Endothelial cell of umbilical vein (primary cell): ENCODE measurements at regions of chr22 and their contacts with region 1.

Region 1: DNA sequence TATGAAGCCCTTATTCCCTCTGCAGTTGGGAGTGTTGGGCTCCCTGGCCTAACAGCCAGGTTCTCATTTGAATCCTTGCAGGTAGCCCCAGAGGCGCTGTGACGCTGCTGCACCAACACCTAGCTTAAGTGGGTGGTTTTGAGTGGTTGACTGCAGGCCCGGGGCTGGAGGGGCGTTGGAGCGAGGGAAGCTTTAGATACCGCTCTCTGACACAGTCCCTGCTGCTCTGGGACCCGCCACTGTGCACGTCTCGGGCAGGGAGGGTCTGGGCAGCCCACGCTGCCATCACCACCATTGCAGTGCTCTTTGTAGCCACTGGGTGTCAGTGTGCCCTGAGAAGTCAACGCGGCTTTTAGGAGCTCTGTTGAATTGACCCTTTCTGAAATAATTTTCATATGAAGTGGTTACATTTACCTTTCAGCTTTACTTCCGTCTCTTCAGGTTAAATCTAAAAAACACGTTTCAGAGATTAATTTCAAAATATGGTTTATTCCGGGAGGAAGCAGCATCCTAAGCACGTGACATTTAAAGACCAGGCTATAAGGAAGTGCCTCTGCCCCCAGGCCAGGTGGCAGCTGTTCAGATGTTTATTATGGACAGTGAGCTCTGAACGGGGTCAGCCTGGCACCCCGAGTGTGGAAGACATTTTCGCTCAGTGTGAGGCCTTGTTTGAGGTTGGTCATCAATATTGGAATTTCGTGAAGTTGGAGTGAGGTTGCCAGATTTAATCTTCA is 30.9 kb upstream of the PARVB start:
- DNase-seq: peak; percentile 53
- H3K4me3 ChIP-seq: no peak overlapping the region
- H3K27ac ChIP-seq: no peak overlapping the region
- H3K4me1 ChIP-seq: peaks cover 6% of the 10 kb centered on the region
- H3K27me3 ChIP-seq: no peaks in the 10 kb centered on the region
- CTCF ChIP-seq: peak; percentile 90 to 94
- POLR2A ChIP-seq: no peak

Region 2: DNA sequence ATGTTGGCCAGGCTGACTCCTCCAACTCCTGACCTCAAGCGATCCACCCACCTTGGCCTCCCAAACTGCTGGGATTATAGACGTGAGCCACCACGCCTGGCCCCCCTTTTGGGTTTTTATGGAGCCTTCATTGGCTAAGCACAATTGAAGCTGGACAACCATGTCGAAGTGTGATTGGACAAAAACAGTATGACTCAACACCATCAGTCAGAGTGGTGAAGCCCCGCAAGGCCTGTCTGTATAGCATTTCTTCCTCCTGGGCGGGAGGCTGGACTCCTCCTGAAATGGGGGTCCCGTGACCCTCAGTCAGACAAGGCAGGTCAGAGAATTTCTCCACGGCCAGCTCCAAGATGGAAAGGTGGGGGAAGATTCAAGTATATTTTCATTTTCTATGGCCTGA is 27.8 kb after region 1 on chr22:
- CTCF ChIA-PET with region 1: interaction called, 21 read pairs
- POLR2A ChIA-PET with region 1: no interaction called
- dilution Hi-C with region 1: no loop called
- intact Hi-C with region 1: no loop called
- DNase-seq: peak; percentile 54
- H3K4me3 ChIP-seq: no peak overlapping the region
- H3K27ac ChIP-seq: peak overlapping the region; percentile 96
- H3K4me1 ChIP-seq: peaks cover 42% of the 10 kb centered on the region
- H3K27me3 ChIP-seq: no peaks in the 10 kb centered on the region
- CTCF ChIP-seq: no peak
- POLR2A ChIP-seq: no peak

Region 3: DNA sequence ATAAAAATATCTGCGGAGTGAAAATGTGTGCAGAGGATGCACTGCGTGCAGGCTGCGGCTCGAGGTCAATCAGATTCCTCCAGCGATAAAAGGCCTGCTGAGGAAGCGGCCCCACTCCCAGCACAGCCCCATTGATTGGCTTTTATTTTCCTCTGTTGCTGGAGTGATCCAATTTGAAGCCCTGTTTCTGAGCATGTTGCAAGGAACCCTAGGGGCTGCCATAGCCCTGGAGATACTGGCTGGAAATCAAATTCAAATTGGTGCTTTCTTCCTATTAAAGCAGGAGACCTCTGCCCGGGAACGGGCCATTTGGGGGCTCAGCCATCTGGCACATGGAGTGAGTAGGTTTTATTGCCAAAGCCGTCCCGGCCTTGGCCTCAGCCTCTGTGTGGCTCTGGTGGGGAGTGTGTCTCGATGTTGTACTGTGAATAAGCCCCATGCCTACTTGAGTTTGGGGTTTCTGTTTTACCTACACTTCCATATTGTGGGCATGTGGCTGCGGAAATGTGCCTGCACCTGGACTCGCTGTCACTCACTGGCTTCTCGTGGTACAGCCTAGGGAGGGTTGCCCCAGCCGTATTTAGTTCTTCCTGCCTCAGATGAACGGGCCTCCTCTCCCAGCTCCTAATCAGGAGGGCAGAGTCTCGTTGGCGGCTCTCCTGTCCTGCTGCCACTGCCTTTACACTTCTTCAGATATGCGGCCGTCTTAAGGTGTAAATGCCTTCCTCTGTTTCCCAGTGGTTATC is 56.5 kb after region 1 on chr22:
- CTCF ChIA-PET with region 1: interaction called, 11 read pairs
- POLR2A ChIA-PET with region 1: no interaction called
- dilution Hi-C with region 1: no loop called
- intact Hi-C with region 1: no loop called
- DNase-seq: peak; percentile 33
- H3K4me3 ChIP-seq: no peak overlapping the region
- H3K27ac ChIP-seq: peak overlapping the region; percentile 5
- H3K4me1 ChIP-seq: peaks cover 32% of the 10 kb centered on the region
- H3K27me3 ChIP-seq: no peaks in the 10 kb centered on the region
- CTCF ChIP-seq: no peak
- POLR2A ChIP-seq: no peak

Region 4: DNA sequence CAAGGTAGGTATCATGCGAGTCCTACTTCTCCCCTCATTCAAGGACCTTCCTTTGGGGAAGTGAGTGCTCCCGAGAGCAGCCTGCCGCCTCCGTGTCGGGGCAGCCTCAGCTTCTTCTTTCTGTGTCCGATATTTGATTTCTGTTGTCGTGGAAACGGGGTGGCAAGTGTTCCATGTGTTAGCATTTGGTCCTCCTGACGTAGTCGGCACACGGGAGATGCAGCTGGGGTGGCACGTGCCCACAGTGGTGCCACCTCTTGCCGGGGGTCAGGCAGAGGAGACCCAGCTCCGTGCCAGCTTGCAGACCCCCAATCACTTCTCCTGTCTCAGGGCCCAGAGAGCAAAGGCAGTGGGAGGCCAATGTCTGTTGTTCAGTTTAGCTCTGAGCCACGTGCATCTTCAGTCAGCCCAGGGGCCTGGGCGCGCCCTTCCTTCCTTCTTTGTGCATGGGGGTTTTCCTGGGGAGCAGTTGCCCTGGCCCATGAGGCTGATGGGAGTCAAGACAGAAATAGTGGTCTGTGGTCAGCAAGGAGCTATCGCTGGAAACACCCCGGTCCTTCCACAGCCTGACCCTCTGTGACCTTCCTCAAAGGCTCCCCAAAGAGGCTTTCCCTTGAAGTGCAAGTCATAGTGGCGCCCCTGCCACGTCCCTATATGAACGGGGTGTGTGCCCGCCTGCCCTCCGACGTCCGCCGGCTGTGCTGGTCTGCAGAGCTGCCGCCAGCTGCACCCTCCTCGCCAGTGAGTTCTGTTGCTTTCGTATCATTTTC is 75.4 kb after region 1 on chr22:
- CTCF ChIA-PET with region 1: interaction called, 50 read pairs
- POLR2A ChIA-PET with region 1: no interaction called
- dilution Hi-C with region 1: no loop called
- intact Hi-C with region 1: no loop called
- DNase-seq: no peak
- H3K4me3 ChIP-seq: no peak overlapping the region
- H3K27ac ChIP-seq: no peak overlapping the region
- H3K4me1 ChIP-seq: peaks cover 18% of the 10 kb centered on the region
- H3K27me3 ChIP-seq: no peaks in the 10 kb centered on the region
- CTCF ChIP-seq: no peak
- POLR2A ChIP-seq: no peak

Region 5: GRCh38 chr22:44097263-44098082 is 104.3 kb after region 1 on chr22:
- CTCF ChIA-PET with region 1: interaction called, 11 read pairs
- POLR2A ChIA-PET with region 1: no interaction called
- dilution Hi-C with region 1: no loop called
- intact Hi-C with region 1: no loop called
- DNase-seq: no peak
- H3K4me3 ChIP-seq: no peak overlapping the region
- H3K27ac ChIP-seq: no peak overlapping the region
- H3K4me1 ChIP-seq: no peaks in the 10 kb centered on the region
- H3K27me3 ChIP-seq: no peaks in the 10 kb centered on the region
- CTCF ChIP-seq: no peak
- POLR2A ChIP-seq: no peak

Region 6: GRCh38 chr22:44329179-44329796 is 336.1 kb after region 1 on chr22:
- CTCF ChIA-PET with region 1: interaction called, 14 read pairs
- POLR2A ChIA-PET with region 1: no interaction called
- dilution Hi-C with region 1: no loop called
- intact Hi-C with region 1: loop called (anchors 5 kb)
- DNase-seq: no peak
- H3K4me3 ChIP-seq: no peak overlapping the region
- H3K27ac ChIP-seq: no peak overlapping the region
- H3K4me1 ChIP-seq: no peaks in the 10 kb centered on the region
- H3K27me3 ChIP-seq: peaks cover 29 to 30% of the 10 kb centered on the region in 2 experiments
- CTCF ChIP-seq: no peak
- POLR2A ChIP-seq: no peak

Region 7: DNA sequence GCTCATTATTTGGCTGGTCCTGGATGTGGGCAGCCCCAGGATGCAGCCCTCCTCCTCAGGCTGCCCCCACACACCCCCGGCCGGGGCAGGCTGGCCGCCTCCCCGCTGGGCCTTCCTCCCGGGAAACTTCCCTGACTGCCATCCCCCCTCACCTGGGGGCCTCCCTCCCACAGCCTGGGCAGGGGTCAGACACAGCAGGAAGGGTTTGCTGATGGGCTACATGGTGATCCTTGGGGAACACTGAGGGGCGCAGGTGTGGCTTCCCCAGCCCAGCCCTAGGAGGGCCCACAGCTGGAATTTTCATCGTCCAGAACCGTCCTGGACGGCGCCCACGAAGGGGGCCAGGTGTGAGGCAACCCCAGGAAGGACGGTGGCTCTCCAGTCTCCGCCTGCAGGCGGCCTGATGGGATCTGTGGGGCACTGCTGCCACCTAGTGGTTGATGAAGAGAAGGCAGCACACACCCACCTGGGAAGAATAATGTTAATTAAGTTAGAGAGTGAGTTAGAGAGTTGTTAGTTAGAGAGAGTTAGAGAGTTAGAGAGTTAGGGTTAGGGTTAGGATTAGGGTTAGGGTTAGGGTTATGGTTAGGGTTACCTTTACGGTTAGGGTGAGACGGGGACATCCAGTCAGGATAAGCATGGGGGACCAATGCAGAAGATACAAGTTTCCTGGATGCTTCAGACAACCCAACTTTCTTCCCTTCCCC is 632.9 kb after region 1 on chr22:
- CTCF ChIA-PET with region 1: interaction called, 92 read pairs
- POLR2A ChIA-PET with region 1: no interaction called
- dilution Hi-C with region 1: no loop called
- intact Hi-C with region 1: loop called (anchors 1 kb)
- DNase-seq: peak; percentile 62
- H3K4me3 ChIP-seq: no peak overlapping the region
- H3K27ac ChIP-seq: no peak overlapping the region
- H3K4me1 ChIP-seq: no peaks in the 10 kb centered on the region
- H3K27me3 ChIP-seq: no peaks in the 10 kb centered on the region
- CTCF ChIP-seq: peak; percentile 85 to 88
- POLR2A ChIP-seq: no peak